A673 (cell line): ENCODE measurements at regions of chr15 and their contacts with region 1.

Region 1: GRCh38 chr15:101127506-101128076 is 124.3 kb downstream of the CHSY1 start:
- DNase-seq: peak; percentile 96
- H3K4me3 ChIP-seq: peak overlapping the region; percentile 7
- H3K27ac ChIP-seq: peak overlapping the region; percentile 96
- H3K4me1 ChIP-seq: peaks cover 42% of the 10 kb centered on the region
- H3K27me3 ChIP-seq: no peaks in the 10 kb centered on the region
- CTCF ChIP-seq: no peak

Region 2: DNA sequence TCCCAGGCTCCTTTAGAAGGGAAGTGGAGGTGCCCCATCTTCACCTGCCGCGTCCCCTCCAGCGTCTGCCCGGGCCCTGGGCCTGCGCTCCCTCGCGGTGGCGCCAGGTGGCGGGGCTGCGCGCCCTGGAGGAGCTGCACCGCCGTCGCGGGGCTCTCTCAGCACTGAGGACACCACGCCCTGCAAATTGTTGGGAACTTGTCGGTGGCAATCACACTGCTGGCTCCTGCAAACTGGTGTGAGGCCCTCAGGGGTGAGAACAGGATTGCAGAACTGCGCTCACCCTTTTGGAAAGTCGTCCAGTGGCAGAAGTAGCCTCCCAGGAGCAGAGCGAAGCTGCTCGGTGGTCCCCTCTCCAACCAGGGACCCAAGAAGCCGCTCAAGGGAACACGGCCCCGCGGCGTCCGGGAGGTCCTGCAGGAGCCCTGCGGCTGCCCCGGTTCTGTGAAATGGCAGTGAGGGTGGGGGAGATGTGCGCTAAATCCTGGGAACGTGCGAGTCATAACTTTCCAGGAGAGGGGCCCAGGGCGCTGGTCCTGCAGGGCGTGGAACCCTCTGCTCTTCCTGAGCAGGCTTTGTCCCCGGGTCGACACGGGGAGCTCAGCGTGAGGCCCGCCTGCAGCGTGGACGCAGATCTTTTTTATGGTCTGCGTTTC is 209.4 kb before region 1 on chr15:
- CTCF ChIA-PET with region 1: no interaction called
- POLR2A ChIA-PET with region 1: no interaction called
- intact Hi-C with region 1: no loop called
- DNase-seq: peak; percentile 89
- H3K4me3 ChIP-seq: peak overlapping the region; percentile 51
- H3K27ac ChIP-seq: no peak overlapping the region
- H3K4me1 ChIP-seq: no peaks in the 10 kb centered on the region
- H3K27me3 ChIP-seq: peaks cover 32% of the 10 kb centered on the region
- CTCF ChIP-seq: peak; percentile 92

Region 3: GRCh38 chr15:101156509-101157159 is 29.0 kb after region 1 on chr15:
- CTCF ChIA-PET with region 1: interaction called, 5 read pairs
- POLR2A ChIA-PET with region 1: no interaction called
- intact Hi-C with region 1: loop called (anchors 2 kb)
- DNase-seq: peak; percentile 96
- H3K4me3 ChIP-seq: no peak overlapping the region
- H3K27ac ChIP-seq: peak overlapping the region; percentile 74
- H3K4me1 ChIP-seq: peaks cover 42% of the 10 kb centered on the region
- H3K27me3 ChIP-seq: no peaks in the 10 kb centered on the region
- CTCF ChIP-seq: no peak

Region 4: DNA sequence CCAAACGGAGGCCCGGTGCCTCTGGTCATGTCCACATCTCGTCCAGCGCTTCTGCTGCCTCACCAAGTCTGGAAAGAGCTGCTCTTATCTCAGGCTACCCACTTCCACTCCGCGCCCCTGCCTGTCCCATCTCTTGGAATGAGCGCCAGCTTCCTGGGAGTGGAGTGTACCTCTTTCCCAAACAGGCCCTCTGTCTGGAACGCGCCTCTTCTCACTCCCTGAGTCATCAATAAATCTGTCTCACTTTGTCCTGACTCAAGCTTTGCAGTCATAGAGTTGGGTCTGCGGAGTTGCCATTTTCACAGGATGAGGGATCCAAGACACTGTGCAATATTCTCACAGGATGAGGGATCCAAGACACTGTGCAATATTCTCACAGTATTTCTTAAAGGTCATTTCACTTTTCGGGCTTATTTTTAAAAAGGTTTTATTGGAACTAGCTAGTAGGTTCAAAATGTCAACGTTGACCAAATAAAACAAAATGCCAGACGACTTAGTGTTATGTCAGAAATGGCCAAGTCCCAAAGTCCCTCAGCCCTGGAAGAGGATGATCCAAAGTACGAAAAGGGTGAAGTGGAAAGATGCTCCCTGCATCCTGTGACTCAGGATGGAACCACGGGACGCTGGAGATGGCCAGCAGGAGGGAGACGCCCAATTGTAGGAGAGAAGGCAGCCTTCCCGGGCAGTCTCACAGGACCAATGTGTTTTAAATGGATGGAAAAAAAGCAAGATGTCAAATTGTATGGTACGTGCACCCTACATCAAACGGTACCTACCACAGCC is 43.2 kb after region 1 on chr15:
- CTCF ChIA-PET with region 1: no interaction called
- POLR2A ChIA-PET with region 1: no interaction called
- intact Hi-C with region 1: loop called (anchors 5 kb)
- DNase-seq: no peak
- H3K4me3 ChIP-seq: no peak overlapping the region
- H3K27ac ChIP-seq: no peak overlapping the region
- H3K4me1 ChIP-seq: peaks cover 33% of the 10 kb centered on the region
- H3K27me3 ChIP-seq: no peaks in the 10 kb centered on the region
- CTCF ChIP-seq: no peak